ENCODE measurements at regions of chr5 and their contacts with region 1.

Region 1: DNA sequence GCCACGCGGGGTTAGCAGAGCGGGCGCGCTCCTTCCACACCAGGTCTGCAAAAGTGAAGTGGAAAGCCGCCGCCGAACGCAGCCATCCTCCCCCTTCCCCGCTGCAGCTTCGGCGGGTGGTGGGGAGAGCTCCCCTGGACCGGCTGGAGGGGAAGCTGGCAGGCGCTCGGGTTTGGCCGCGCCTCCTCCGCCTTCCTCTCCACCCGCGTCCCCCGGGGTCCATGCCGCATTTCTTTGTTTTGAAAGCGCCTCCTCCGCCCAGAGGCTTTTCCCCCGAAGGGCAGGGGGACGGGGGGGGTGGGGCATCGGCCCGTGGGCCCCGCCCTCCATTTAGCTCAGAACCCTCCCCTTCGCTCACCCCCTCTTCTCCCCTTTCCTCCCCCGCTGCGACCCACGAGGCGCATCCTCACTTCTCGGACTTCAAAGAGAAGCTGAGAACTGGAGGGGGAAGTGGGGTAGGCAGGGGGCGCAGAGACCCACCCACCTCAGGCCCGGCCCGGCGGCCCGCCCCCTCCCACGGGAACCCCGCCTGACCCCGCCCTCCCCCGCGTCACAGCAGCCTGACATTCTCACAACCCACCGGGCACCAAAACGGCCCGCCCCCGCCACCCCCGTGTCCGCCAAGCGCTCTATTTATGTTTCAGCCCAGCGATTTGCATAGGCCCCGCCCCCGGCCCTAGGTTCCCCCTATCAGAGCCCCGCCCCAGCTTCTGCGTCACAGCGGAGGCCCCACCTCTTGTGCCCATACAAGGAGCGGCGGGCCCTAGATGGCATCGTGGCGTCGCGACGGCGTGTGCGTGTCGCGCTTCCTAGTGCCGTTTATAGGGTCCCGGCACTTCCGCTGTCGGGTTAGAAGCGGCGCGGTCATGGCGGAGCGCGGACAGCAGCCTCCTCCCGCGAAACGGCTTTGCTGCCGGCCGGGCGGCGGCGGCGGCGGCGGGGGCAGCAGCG is at the start of gene ZSWIM6:
- DNase-seq: peak; percentile 99
- H3K4me3 ChIP-seq: peak within 1 kb of the TSS; percentile 92
- H3K27ac ChIP-seq: peak within 1 kb of the TSS; percentile 86
- H3K4me1 ChIP-seq: peaks cover 40% of the 10 kb centered on the region
- H3K27me3 ChIP-seq: no peaks in the 10 kb centered on the region
- CTCF ChIP-seq: no peak
- total RNA-seq, gene ZSWIM6: 43.9 and 47.3 TPM in 2 replicates

Region 2: GRCh38 chr5:60896991-60897390 is 434.7 kb before region 1 on chr5:
- CTCF ChIA-PET with region 1: no interaction called
- POLR2A ChIA-PET with region 1: no interaction called
- intact Hi-C with region 1: no loop called
- DNase-seq: no peak
- H3K4me3 ChIP-seq: no peak overlapping the region
- H3K27ac ChIP-seq: no peak overlapping the region
- H3K4me1 ChIP-seq: no peaks in the 10 kb centered on the region
- H3K27me3 ChIP-seq: no peaks in the 10 kb centered on the region
- CTCF ChIP-seq: no peak

Region 3: DNA sequence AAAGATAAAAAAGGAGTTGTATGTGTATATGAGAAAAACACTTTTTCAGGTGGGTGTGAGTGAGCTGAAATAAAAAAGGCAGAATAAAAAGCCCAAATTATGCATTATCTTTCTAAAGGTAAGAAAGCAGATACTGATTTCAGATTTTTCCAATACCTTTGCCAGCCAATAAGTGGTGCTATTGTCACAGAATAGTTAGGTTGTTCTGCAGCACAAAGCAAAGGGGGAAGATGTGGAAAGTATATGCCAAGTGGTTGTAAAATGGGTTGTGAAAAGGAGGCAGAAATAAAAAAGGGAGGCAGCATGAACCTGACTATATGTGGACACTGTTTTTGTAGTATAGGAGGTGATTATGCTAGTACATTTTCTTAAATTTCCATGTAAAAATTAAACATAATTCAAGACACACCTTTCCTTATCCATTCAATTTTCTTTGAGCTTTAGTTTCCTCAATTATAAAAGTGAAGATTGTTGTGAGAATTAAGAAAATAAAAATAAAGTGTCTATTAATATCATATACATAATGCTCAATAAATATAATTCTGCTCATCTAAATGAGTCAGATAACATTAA is 276.2 kb before region 1 on chr5:
- CTCF ChIA-PET with region 1: no interaction called
- POLR2A ChIA-PET with region 1: no interaction called
- intact Hi-C with region 1: loop called (anchors 5 kb)
- DNase-seq: peak; percentile 75
- H3K4me3 ChIP-seq: no peak overlapping the region
- H3K27ac ChIP-seq: no peak overlapping the region
- H3K4me1 ChIP-seq: peaks cover 24% of the 10 kb centered on the region
- H3K27me3 ChIP-seq: no peaks in the 10 kb centered on the region
- CTCF ChIP-seq: peak; percentile 75

Region 4: DNA sequence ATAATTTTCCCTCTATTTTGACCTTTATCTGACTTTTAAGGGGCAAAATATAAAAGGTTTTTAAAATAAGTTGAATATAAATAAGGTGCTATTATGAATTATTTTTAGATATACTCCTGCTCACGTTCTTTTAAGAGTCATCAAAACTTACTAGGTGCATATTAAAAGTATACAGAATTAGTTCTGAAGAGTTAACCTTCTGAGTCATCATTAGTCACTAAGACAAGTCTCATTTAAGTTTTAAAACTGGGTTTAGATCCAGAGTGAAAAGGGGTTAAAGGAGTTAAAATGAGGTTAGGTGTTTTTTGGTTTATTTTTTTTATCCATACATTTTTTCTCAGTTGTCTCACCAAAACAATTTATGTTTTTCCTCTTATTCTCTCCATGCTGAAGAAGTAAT is 211.1 kb before region 1 on chr5:
- CTCF ChIA-PET with region 1: no interaction called
- POLR2A ChIA-PET with region 1: no interaction called
- intact Hi-C with region 1: no loop called
- DNase-seq: no peak
- H3K4me3 ChIP-seq: no peak overlapping the region
- H3K27ac ChIP-seq: no peak overlapping the region
- H3K4me1 ChIP-seq: no peaks in the 10 kb centered on the region
- H3K27me3 ChIP-seq: no peaks in the 10 kb centered on the region
- CTCF ChIP-seq: no peak

Region 5: GRCh38 chr5:61397238-61397637 is 65.6 kb after region 1 on chr5:
- CTCF ChIA-PET with region 1: no interaction called
- POLR2A ChIA-PET with region 1: no interaction called
- intact Hi-C with region 1: loop called (anchors 5 kb)
- DNase-seq: peak; percentile 73
- H3K4me3 ChIP-seq: no peak overlapping the region
- H3K27ac ChIP-seq: no peak overlapping the region
- H3K4me1 ChIP-seq: peaks cover 38% of the 10 kb centered on the region
- H3K27me3 ChIP-seq: no peaks in the 10 kb centered on the region
- CTCF ChIP-seq: no peak

Region 6: GRCh38 chr5:61509324-61509723 is 177.6 kb after region 1 on chr5:
- CTCF ChIA-PET with region 1: interaction called, 3 read pairs
- POLR2A ChIA-PET with region 1: no interaction called
- intact Hi-C with region 1: loop called (anchors 10 kb)
- DNase-seq: no peak
- H3K4me3 ChIP-seq: no peak overlapping the region
- H3K27ac ChIP-seq: no peak overlapping the region
- H3K4me1 ChIP-seq: peaks cover 20% of the 10 kb centered on the region
- H3K27me3 ChIP-seq: no peaks in the 10 kb centered on the region
- CTCF ChIP-seq: no peak

Region 7: DNA sequence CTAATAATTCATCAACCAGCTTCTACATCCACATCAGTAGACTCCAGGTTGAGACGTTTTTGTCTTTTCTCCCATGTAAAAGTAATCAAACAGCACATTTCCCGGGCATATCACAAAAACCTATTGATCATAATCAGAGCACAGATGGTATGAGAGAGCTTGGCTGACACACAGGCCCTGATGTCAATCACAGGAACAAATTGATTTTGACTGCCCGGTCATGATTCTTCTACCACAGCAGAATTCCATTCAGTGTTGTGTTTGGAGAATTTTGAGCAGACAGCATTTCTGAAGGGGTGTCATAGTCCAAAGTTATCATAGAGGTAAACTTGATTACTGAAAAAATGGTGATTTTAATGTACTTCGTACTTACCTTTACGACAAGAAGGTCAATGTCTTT is 351.5 kb after region 1 on chr5:
- CTCF ChIA-PET with region 1: no interaction called
- POLR2A ChIA-PET with region 1: interaction called, 3 read pairs
- intact Hi-C with region 1: loop called (anchors 5 kb)
- DNase-seq: peak; percentile 62
- H3K4me3 ChIP-seq: no peak overlapping the region
- H3K27ac ChIP-seq: peak overlapping the region; percentile 96
- H3K4me1 ChIP-seq: peaks cover 43% of the 10 kb centered on the region
- H3K27me3 ChIP-seq: no peaks in the 10 kb centered on the region
- CTCF ChIP-seq: no peak

Measured in A673 (cell line).